ENCODE measurements at regions of chr20 and their contacts with region 1.

Region 1: DNA sequence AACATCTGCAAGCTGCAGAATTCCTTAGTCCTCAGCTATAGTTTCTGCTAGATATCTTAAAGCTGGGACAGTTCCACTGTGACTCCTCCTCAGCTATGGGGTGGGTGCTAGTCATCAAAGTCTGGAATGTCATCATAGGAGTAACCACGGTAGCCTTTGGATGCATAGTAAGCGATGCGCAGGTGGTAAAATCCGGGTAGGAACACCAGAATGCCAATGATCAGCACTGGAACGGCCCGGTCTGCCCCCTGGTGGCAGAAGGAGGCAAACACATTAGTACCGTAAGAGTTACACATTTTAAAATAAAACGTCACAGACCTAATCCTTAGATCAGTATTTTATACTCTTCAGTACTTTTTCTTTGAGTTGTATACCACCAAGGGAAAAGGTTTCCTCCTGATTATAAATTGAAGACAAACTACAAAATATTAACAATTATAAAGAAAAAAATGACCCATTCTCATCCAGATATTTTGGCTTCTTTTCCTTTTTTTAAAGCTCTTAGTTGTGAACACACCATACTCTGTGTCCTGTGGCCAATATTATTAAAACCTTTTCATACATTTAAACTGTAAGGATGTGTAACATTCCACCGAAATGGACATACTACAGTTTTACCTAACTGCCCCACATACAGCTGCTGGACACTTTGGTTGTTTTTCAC is 18.9 kb downstream of the PCNA start:
- DNase-seq: peak; percentile 65
- ATAC-seq: peak; percentile 87
- H3K4me3 Mint-ChIP-seq: no peak overlapping the region
- H3K27ac Mint-ChIP-seq: peak overlapping the region; percentile 53
- H3K4me1 Mint-ChIP-seq: peaks cover 5% of the 10 kb centered on the region
- H3K27me3 Mint-ChIP-seq: no peaks in the 10 kb centered on the region
- CTCF ChIP-seq: peak; percentile 63

Region 2: DNA sequence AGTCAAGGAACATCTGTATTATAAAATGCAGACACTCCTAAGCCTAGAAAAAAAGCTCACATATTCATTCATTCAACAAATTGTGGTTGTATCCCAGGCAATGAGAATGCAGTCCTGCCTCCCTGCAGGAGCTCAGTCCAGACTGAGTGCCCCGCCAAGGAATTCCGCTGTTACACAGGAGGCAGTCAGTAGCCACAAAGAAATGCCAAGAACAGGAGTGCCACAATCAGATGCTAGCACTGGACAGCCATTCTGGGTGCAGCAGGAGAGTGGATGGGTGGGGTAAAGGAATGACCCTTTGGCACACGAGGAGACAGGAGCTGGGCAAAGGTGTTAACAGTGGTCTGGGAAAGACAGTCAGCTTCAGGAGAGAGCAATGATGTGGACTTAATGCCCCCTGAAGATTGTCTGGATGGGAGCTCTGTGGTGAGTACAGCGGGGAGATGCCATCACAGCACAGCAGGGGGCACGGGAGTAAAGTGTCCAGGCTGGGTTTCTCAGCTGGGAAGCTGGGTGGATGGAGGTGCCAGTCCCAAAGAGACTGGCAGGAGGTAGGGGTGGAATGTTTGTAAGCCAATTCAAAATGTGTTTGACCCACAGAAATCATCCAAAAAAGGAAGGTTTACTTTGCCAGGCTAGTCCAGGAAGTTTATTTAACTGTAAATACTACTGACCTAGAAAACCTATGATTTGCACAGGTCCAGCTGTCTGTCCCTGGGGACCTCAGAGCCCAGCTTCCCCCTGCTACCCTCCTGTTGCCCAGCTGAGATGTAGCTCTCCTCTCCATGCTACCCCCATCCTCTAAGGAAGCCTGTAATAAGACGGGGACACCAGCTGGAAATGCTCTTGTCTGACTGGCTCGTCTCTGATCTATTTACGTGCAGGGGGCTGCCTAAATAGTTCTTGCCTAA is 183.6 kb before region 1 on chr20:
- CTCF ChIA-PET with region 1: interaction called, 14 read pairs
- POLR2A ChIA-PET with region 1: interaction called, 3 read pairs
- intact Hi-C with region 1: no loop called
- DNase-seq: no peak
- ATAC-seq: no peak
- H3K4me3 Mint-ChIP-seq: no peak overlapping the region
- H3K27ac Mint-ChIP-seq: peak overlapping the region; percentile 2
- H3K4me1 Mint-ChIP-seq: peaks cover 38% of the 10 kb centered on the region
- H3K27me3 Mint-ChIP-seq: no peaks in the 10 kb centered on the region
- CTCF ChIP-seq: no peak

Region 3: GRCh38 chr20:4956200-4956810 is 144.5 kb before region 1 on chr20:
- CTCF ChIA-PET with region 1: interaction called, 20 read pairs
- POLR2A ChIA-PET with region 1: no interaction called
- intact Hi-C with region 1: loop called (anchors 1 kb)
- DNase-seq: no peak
- ATAC-seq: no peak
- H3K4me3 Mint-ChIP-seq: no peak overlapping the region
- H3K27ac Mint-ChIP-seq: peak overlapping the region; percentile 18
- H3K4me1 Mint-ChIP-seq: peaks cover 34% of the 10 kb centered on the region
- H3K27me3 Mint-ChIP-seq: no peaks in the 10 kb centered on the region
- CTCF ChIP-seq: peak; percentile 19

Region 4: GRCh38 chr20:5001174-5002076 is 99.4 kb before region 1 on chr20 and contains the start of gene SLC23A2:
- CTCF ChIA-PET with region 1: interaction called, 16 read pairs
- POLR2A ChIA-PET with region 1: interaction called, 3 read pairs
- intact Hi-C with region 1: loop called (anchors 2 kb)
- DNase-seq: peak; percentile 64
- ATAC-seq: peak; percentile 81
- H3K4me3 Mint-ChIP-seq: peak within 1 kb of the TSS; percentile 98
- H3K27ac Mint-ChIP-seq: peak within 1 kb of the TSS; percentile 92
- H3K4me1 Mint-ChIP-seq: peaks cover 43% of the 10 kb centered on the region
- H3K27me3 Mint-ChIP-seq: no peaks in the 10 kb centered on the region
- CTCF ChIP-seq: no peak
- total RNA-seq, gene SLC23A2: 70.9 and 79.8 TPM in 2 replicates

Region 5: GRCh38 chr20:5078399-5078958 is 22.3 kb before region 1 on chr20:
- CTCF ChIA-PET with region 1: interaction called, 9 read pairs
- POLR2A ChIA-PET with region 1: no interaction called
- intact Hi-C with region 1: loop called (anchors 2 kb)
- DNase-seq: peak; percentile 50
- ATAC-seq: peak; percentile 91
- H3K4me3 Mint-ChIP-seq: peak overlapping the region; percentile 71
- H3K27ac Mint-ChIP-seq: peak overlapping the region; percentile 92
- H3K4me1 Mint-ChIP-seq: peaks cover 55% of the 10 kb centered on the region
- H3K27me3 Mint-ChIP-seq: no peaks in the 10 kb centered on the region
- CTCF ChIP-seq: no peak

Region 6: DNA sequence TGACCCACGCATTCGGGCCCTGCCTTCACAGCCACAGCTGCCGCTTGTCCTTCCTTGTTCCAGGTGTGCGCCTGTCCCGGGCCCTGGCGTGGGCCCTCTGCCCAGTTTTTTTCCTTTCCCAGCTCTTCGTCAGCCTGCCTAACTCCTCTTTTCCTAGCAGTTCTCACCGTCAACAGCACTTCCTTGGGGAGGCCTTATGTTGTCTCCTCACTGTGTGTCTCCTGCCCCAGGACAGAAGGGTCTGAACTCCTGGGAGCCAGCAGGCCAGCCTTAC is 97.8 kb after region 1 on chr20:
- CTCF ChIA-PET with region 1: no interaction called
- POLR2A ChIA-PET with region 1: no interaction called
- intact Hi-C with region 1: no loop called
- DNase-seq: no peak
- ATAC-seq: no peak
- H3K4me3 Mint-ChIP-seq: no peak overlapping the region
- H3K27ac Mint-ChIP-seq: no peak overlapping the region
- H3K4me1 Mint-ChIP-seq: no peaks in the 10 kb centered on the region
- H3K27me3 Mint-ChIP-seq: no peaks in the 10 kb centered on the region
- CTCF ChIP-seq: no peak